Activated CD4-positive, alpha-beta T cell treated with anti-CD3 and anti-CD28 coated beads for 36 hours (primary cell): ENCODE measurements at regions of chr11 and their contacts with region 1.

Region 1: GRCh38 chr11:18105802-18106574 is at the start of gene SAAL1:
- DNase-seq: peak; percentile 95
- ATAC-seq: peak; percentile 97
- H3K4me3 Mint-ChIP-seq: peak within 1 kb of the TSS; percentile 82
- H3K27ac Mint-ChIP-seq: peak within 1 kb of the TSS; percentile 85
- H3K4me1 Mint-ChIP-seq: peaks cover 37% of the 10 kb centered on the region
- H3K27me3 Mint-ChIP-seq: peaks cover 3% of the 10 kb centered on the region
- total RNA-seq, gene SAAL1: 37.4 to 40.9 TPM

Region 2: GRCh38 chr11:16738193-16738946 is 1367.6 kb before region 1 on chr11 and contains the start of gene C11orf58:
- CTCF ChIA-PET with region 1: no interaction called
- POLR2A ChIA-PET with region 1: no interaction called
- intact Hi-C with region 1: loop called in 1 of 2 experiments (anchors 10 kb)
- DNase-seq: peak; percentile 96
- ATAC-seq: peak; percentile 97
- H3K4me3 Mint-ChIP-seq: no peak within 1 kb of the TSS
- H3K27ac Mint-ChIP-seq: peak within 1 kb of the TSS; percentile 92
- H3K4me1 Mint-ChIP-seq: peaks cover 23% of the 10 kb centered on the region
- H3K27me3 Mint-ChIP-seq: no peaks in the 10 kb centered on the region
- total RNA-seq, gene C11orf58: 142 to 193 TPM

Region 3: DNA sequence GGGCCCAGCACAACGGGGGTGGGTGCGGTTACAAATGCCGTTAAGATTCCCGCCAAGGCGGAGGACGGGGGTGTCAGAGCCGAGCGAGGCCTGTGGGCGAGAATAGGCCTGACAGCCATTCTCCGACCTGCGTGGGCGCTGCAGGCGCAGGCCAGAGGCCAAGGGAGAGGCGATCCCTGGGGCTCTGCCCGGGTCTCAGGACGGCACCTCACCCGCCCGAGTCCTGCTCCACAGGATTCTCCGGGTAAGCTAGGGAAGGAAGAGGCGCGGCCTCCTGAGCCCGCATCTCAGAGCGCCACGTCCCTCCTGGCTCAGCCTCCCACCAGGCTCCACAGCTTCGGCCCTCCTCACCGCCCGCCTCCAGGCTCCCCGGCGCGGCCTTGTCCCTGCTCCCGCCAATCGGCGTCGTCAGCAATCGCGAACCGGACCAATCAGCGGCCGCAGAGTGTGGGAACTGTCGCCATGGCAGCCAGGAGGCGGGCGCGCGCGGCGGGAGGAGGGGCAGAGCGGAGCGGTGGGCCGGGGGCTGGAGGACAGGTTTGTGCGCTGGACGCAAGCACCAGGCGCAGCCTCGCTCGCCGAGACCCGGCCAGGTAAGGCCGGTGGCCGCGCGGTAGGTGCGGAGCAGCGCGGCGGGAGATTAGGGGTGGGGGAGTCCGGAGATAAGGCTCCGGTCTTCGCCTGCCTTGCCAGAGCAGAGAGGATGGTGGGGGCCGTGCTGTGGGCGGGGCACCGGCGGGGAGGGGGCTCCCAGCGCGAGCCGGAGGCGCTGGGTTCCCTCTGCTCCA is 829.6 kb before region 1 on chr11 and contains the start of gene NUCB2:
- CTCF ChIA-PET with region 1: no interaction called
- POLR2A ChIA-PET with region 1: no interaction called
- intact Hi-C with region 1: loop called in 1 of 2 experiments (anchors 10 kb)
- DNase-seq: peak; percentile 99
- ATAC-seq: peak; percentile 92
- H3K4me3 Mint-ChIP-seq: peak within 1 kb of the TSS; percentile 75
- H3K27ac Mint-ChIP-seq: peak within 1 kb of the TSS; percentile 96
- H3K4me1 Mint-ChIP-seq: peaks cover 36% of the 10 kb centered on the region
- H3K27me3 Mint-ChIP-seq: no peaks in the 10 kb centered on the region
- total RNA-seq, gene NUCB2: 45.0 to 59.9 TPM

Region 4: DNA sequence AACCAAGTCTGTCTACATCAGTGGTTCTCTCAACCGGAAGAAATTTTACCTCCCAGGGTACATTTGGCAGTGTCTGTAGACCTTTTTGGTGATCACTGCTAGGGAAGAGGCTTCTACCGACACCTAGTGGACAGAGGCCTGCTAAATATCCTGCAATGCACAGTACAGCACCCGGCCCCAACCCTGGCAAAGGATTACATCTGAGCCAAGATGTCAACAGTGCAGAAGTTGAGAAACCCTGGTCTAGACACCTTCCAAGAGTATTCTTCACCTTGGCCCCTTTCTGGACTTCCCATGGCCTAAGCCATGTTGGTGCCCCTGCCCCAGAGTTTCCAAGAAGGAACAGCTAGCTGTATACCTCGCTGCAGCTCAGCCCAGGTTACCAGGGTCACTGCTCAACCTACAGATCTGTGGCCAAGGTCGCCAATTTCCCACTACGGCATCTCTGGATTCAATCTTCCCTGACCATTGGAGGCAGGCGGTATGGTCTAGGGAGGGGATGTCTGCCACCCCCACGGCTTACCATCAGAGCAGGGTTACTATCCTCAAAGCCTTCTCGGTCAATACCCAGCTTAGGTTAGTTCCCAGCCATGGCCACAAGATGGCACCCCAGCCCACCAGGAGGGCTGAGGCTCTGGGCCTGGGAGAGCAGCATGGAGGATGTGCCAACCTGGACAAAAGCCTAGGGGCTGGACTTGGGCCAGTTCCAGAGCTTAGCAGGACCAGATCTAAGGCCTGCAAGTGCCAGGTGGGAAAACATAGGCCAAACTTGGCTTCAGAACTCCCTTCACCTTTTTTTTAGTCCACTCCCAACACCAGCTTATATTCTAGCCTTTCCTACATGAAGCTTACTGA is 375.2 kb before region 1 on chr11:
- CTCF ChIA-PET with region 1: interaction called, 4 read pairs
- POLR2A ChIA-PET with region 1: no interaction called
- intact Hi-C with region 1: loop called in 1 of 2 experiments (anchors 2 kb)
- DNase-seq: peak; percentile 84
- ATAC-seq: peak; percentile 88
- H3K4me3 Mint-ChIP-seq: no peak overlapping the region
- H3K27ac Mint-ChIP-seq: no peak overlapping the region
- H3K4me1 Mint-ChIP-seq: peaks cover 5% of the 10 kb centered on the region
- H3K27me3 Mint-ChIP-seq: peaks cover 36% of the 10 kb centered on the region

Region 5: GRCh38 chr11:17991783-17992433 is 114.1 kb before region 1 on chr11:
- CTCF ChIA-PET with region 1: interaction called, 5 read pairs
- POLR2A ChIA-PET with region 1: no interaction called
- intact Hi-C with region 1: loop called (anchors 1 kb)
- DNase-seq: peak; percentile 63
- ATAC-seq: peak; percentile 78
- H3K4me3 Mint-ChIP-seq: no peak overlapping the region
- H3K27ac Mint-ChIP-seq: no peak overlapping the region
- H3K4me1 Mint-ChIP-seq: no peaks in the 10 kb centered on the region
- H3K27me3 Mint-ChIP-seq: no peaks in the 10 kb centered on the region

Region 6: DNA sequence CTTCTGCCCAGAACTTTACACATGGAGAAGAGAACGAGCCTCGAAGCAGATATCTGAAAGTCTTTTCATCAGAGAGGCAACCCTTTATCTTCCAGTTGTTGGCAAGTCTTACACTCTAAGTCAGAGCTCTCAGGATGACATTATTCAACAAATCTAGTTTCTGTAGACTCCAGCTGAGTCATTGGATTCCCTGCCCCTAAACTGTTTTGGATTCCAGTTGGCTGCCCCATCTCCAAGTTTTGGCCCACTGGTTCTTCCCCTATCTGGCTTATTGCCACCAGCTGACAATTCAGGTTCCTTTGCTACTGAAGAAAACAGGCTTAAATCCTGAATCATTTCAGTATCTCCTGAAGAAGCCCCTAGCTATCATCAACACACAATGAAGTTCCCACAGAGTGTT is 14.3 kb before region 1 on chr11:
- CTCF ChIA-PET with region 1: interaction called, 16 read pairs
- POLR2A ChIA-PET with region 1: no interaction called
- intact Hi-C with region 1: no loop called
- DNase-seq: no peak
- ATAC-seq: no peak
- H3K4me3 Mint-ChIP-seq: no peak overlapping the region
- H3K27ac Mint-ChIP-seq: peak overlapping the region; percentile 52
- H3K4me1 Mint-ChIP-seq: peaks cover 25% of the 10 kb centered on the region
- H3K27me3 Mint-ChIP-seq: no peaks in the 10 kb centered on the region

Region 7: DNA sequence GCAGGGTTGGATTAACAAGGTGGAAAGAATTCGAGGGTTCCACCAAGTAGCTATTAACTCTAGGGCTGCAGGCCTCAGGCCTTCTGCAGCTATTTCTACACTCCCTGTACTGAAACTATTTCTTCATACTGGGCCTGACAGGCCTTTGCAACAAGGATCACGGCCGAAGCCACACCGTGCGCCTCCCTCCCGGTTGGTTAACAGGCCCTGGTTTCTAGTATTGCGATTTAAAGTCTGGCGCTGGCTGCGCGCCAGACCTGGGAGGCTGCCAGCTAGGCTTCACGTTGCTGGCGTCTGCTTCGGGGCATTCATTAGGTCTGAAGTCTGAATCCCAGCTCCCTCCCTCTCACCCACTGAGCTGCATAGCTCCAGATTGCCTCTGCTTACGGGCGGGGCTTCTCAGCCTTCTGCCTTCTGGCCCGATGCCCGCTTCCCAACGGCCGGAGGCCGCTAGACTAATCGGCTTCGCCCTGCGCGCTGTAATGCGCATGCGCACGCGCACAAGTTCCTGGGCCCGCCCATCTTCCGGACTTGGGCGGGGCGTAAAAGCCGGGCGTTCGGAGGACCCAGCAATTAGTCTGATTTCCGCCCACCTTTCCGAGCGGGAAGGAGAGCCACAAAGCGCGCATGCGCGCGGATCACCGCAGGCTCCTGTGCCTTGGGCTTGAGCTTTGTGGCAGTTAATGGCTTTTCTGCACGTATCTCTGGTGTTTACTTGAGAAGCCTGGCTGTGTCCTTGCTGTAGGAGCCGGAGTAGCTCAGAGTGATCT is 289.9 kb after region 1 on chr11:
- CTCF ChIA-PET with region 1: no interaction called
- POLR2A ChIA-PET with region 1: no interaction called
- intact Hi-C with region 1: loop called in 1 of 2 experiments (anchors 5 kb)
- DNase-seq: peak; percentile 96
- ATAC-seq: peak; percentile 65
- H3K4me3 Mint-ChIP-seq: peak overlapping the region; percentile 97
- H3K27ac Mint-ChIP-seq: peak overlapping the region; percentile 99
- H3K4me1 Mint-ChIP-seq: peaks cover 65% of the 10 kb centered on the region
- H3K27me3 Mint-ChIP-seq: no peaks in the 10 kb centered on the region

Region 8: DNA sequence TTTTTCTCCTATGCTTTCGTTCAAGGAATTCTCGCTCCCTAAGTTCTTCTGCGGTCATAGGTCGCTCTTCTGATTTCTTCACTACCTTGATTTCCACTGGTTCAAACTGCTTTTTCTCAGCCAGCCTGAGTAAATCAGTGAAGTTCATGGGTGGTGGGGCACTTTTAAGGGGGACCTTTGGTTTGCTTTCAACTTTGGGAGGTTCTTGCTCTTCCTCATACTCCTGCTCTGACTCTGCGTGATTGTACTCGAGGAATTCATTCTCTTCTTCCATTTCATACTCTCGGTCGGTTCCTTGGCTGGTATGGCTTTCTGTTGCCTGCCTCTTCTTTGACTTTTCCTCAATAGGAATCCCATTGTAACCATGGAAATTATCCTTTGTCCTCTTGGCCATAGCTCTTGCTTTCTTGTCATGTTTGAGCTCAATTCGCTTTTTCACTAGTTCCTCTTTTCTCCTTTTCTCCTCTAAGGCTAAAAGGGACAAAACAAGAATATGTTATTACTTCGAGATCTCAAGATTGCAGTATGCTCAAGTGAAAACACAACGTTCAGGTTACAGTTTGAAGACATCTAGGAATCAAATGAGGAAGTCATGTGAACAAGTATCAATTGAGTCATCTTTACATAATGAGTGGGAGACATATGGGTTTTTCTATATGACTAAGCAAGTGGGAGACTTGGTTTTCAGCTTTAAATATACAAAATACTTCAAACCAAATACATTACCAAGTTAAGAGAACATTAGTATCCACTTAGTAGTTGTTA is 509.8 kb after region 1 on chr11:
- CTCF ChIA-PET with region 1: no interaction called
- POLR2A ChIA-PET with region 1: no interaction called
- intact Hi-C with region 1: no loop called
- DNase-seq: no peak
- ATAC-seq: peak; percentile 83
- H3K4me3 Mint-ChIP-seq: peak overlapping the region; percentile 13
- H3K27ac Mint-ChIP-seq: peak overlapping the region; percentile 91
- H3K4me1 Mint-ChIP-seq: peaks cover 48% of the 10 kb centered on the region
- H3K27me3 Mint-ChIP-seq: no peaks in the 10 kb centered on the region